ENCODE measurements at regions of chr9 and their contacts with region 1.

Region 1: GRCh38 chr9:113999256-114000062 is 78.6 kb downstream of the AMBP start:
- DNase-seq: no peak
- ATAC-seq: peak; percentile 36 to 85 (median 76)
- H3K4me3 ChIP-seq: no peak overlapping the region
- H3K27ac ChIP-seq: no peak overlapping the region
- H3K4me1 ChIP-seq: peaks cover 1% of the 10 kb centered on the region
- H3K27me3 ChIP-seq: no peaks in the 10 kb centered on the region
- CTCF ChIP-seq: no peak

Region 2: GRCh38 chr9:113913426-113914195 is 85.8 kb before region 1 on chr9:
- intact Hi-C with region 1: no loop called
- DNase-seq: peak; percentile 43 to 81
- ATAC-seq: peak; percentile 96 to 99 (median 98)
- H3K4me3 ChIP-seq: peak overlapping the region; percentile 7
- H3K27ac ChIP-seq: peak overlapping the region; percentile 85
- H3K4me1 ChIP-seq: peaks cover 38% of the 10 kb centered on the region
- H3K27me3 ChIP-seq: no peaks in the 10 kb centered on the region
- CTCF ChIP-seq: no peak

Region 3: GRCh38 chr9:113949571-113950078 is 49.8 kb before region 1 on chr9:
- intact Hi-C with region 1: no loop called
- DNase-seq: no peak
- ATAC-seq: no peak
- H3K4me3 ChIP-seq: no peak overlapping the region
- H3K27ac ChIP-seq: no peak overlapping the region
- H3K4me1 ChIP-seq: no peaks in the 10 kb centered on the region
- H3K27me3 ChIP-seq: no peaks in the 10 kb centered on the region
- CTCF ChIP-seq: no peak

Region 4: DNA sequence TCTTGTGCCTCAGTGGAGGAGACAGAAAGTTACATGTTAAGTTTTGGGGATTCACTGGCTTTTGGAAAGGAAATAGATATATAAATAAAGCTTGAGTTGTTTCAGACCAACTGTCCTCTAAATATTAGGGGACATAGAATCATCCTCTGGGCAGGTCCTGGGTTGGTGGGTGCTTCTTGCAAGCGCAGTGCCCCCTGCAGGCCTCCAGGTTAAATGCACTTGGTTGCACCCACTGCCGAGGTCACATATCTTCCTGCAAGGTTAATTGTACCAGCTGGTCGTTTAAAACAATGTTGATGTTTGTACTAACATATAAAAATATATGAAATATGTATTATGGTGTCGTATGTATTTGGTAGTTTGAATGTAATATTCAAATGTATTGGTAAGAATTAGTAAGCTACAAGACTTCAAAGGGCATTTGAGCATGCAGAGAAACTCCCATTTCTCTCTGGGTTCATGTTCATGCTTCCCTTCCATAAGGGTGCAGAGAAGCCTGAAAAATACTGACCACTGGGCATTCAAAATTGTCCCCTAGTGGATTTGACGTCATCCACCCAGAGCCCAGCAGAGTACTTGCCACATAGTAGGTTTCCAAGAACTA is 36.3 kb before region 1 on chr9:
- intact Hi-C with region 1: no loop called
- DNase-seq: peak; percentile 54 to 68
- ATAC-seq: peak; percentile 74 to 88 (median 85)
- H3K4me3 ChIP-seq: no peak overlapping the region
- H3K27ac ChIP-seq: no peak overlapping the region
- H3K4me1 ChIP-seq: no peaks in the 10 kb centered on the region
- H3K27me3 ChIP-seq: no peaks in the 10 kb centered on the region
- CTCF ChIP-seq: peak; percentile 83

Region 5: DNA sequence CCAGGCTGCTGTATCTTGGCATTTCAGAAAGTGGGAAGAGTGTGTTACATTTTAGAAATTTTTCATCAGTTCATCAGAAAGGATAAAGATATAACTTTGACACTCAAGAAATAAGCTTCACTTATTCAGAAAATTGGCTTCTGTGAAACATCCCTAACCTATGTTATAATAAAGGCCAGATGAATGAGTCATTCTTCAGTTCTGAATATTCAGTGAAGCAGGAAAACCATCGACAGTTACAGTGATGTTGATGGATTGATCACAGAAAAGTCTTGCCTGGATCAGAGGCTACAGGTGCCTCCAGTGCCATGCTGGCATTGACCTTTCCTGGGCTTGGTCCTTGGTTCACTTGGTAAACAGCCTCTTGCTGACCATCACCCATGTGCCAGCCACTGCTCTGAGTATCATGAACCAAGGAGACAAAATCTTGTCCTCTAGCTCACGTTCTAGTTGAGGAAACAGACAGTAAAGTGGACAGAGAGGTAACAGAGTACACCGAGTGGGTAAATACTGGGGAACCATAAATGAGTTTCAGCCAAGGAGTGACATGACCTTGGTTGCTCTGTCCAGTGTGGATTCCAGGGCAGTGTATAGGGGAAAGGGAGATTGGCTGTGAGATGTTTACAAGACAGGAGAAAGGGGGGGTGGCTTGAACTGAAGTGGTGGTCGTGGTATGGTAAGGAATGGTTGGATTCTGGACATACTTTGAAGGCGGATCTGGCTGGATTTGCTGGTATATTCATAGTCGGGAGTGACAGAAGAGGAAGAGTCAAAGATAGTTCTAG is 19.9 kb before region 1 on chr9:
- intact Hi-C with region 1: loop called in 1 of 2 experiments (anchors 2 kb)
- DNase-seq: no peak
- ATAC-seq: no peak
- H3K4me3 ChIP-seq: no peak overlapping the region
- H3K27ac ChIP-seq: no peak overlapping the region
- H3K4me1 ChIP-seq: no peaks in the 10 kb centered on the region
- H3K27me3 ChIP-seq: no peaks in the 10 kb centered on the region
- CTCF ChIP-seq: no peak

Region 6: GRCh38 chr9:114409103-114409780 is 409.8 kb after region 1 on chr9:
- intact Hi-C with region 1: no loop called
- DNase-seq: no peak
- ATAC-seq: no peak
- H3K4me3 ChIP-seq: no peak overlapping the region
- H3K27ac ChIP-seq: no peak overlapping the region
- H3K4me1 ChIP-seq: no peaks in the 10 kb centered on the region
- H3K27me3 ChIP-seq: no peaks in the 10 kb centered on the region
- CTCF ChIP-seq: no peak